ENCODE measurements at regions of chr9 and their contacts with region 1.

Region 1: GRCh38 chr9:76451234-76451633 is 7.7 kb upstream of the GCNT1 start:
- DNase-seq: no peak
- ATAC-seq: no peak
- H3K4me3 ChIP-seq: no peak overlapping the region
- H3K4me3 Mint-ChIP-seq: no peak overlapping the region
- H3K27ac ChIP-seq: no peak overlapping the region
- H3K27ac Mint-ChIP-seq: no peak overlapping the region
- H3K4me1 ChIP-seq: peaks cover 8% of the 10 kb centered on the region
- H3K4me1 Mint-ChIP-seq: peaks cover 4% of the 10 kb centered on the region
- H3K27me3 ChIP-seq: no peaks in the 10 kb centered on the region
- H3K27me3 Mint-ChIP-seq: no peaks in the 10 kb centered on the region
- CTCF ChIP-seq: no peak

Region 2: GRCh38 chr9:76658535-76659231 is 207.4 kb after region 1 on chr9:
- CTCF ChIA-PET with region 1: no interaction called
- POLR2A ChIA-PET with region 1: no interaction called
- intact Hi-C with region 1: loop called (anchors 1 to 2 kb)
- DNase-seq: peak in 3 of 14 experiments; percentile 62
- ATAC-seq: no peak
- H3K4me3 ChIP-seq: no peak overlapping the region
- H3K4me3 Mint-ChIP-seq: no peak overlapping the region
- H3K27ac ChIP-seq: no peak overlapping the region
- H3K27ac Mint-ChIP-seq: no peak overlapping the region
- H3K4me1 ChIP-seq: peaks cover 2% of the 10 kb centered on the region
- H3K4me1 Mint-ChIP-seq: peaks cover 23% of the 10 kb centered on the region
- H3K27me3 ChIP-seq: no peaks in the 10 kb centered on the region
- H3K27me3 Mint-ChIP-seq: peaks cover 4% of the 10 kb centered on the region
- CTCF ChIP-seq: peak; percentile 48

Region 3: GRCh38 chr9:76704593-76705204 is 253.5 kb after region 1 on chr9:
- CTCF ChIA-PET with region 1: interaction called, 9 read pairs
- POLR2A ChIA-PET with region 1: no interaction called
- intact Hi-C with region 1: loop called (anchors 1 kb)
- DNase-seq: peak in 4 of 14 experiments; percentile 12 to 77 (median 66)
- ATAC-seq: no peak
- H3K4me3 ChIP-seq: no peak overlapping the region
- H3K4me3 Mint-ChIP-seq: no peak overlapping the region
- H3K27ac ChIP-seq: no peak overlapping the region
- H3K27ac Mint-ChIP-seq: no peak overlapping the region
- H3K4me1 ChIP-seq: peaks cover 3% of the 10 kb centered on the region
- H3K4me1 Mint-ChIP-seq: peaks cover 5% of the 10 kb centered on the region
- H3K27me3 ChIP-seq: peaks cover 5 to 9% of the 10 kb centered on the region in 2 experiments
- H3K27me3 Mint-ChIP-seq: peaks cover 48% of the 10 kb centered on the region
- CTCF ChIP-seq: peak; percentile 72

Region 4: DNA sequence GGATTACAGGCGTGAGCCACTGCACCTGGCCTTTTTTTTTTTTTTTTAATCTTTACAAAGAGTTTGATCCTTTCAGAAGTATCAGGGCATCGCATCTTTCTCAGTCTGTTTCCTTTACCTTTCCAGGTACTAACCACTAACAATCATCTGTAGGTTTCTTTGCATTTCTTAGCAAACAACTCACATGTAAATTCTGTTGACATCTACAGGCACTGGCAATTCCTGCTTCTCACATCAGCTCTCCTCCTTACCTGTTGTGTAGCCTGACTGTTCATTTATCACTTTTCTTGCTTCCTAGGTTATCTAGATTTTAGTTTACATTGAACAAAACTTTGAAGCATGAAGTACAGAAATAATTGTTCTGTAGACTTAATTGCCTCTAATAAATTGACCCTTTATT is 698.6 kb after region 1 on chr9:
- CTCF ChIA-PET with region 1: no interaction called
- POLR2A ChIA-PET with region 1: no interaction called
- intact Hi-C with region 1: loop called (anchors 1 to 2 kb)
- DNase-seq: no peak
- ATAC-seq: no peak
- H3K4me3 ChIP-seq: no peak overlapping the region
- H3K4me3 Mint-ChIP-seq: no peak overlapping the region
- H3K27ac ChIP-seq: no peak overlapping the region
- H3K27ac Mint-ChIP-seq: no peak overlapping the region
- H3K4me1 ChIP-seq: no peaks in the 10 kb centered on the region
- H3K4me1 Mint-ChIP-seq: no peaks in the 10 kb centered on the region
- H3K27me3 ChIP-seq: peaks cover 0 to 4% of the 10 kb centered on the region in 2 experiments
- H3K27me3 Mint-ChIP-seq: peaks cover 45% of the 10 kb centered on the region
- CTCF ChIP-seq: no peak